ENCODE measurements at regions of chr12 and their contacts with region 1.

Region 1: DNA sequence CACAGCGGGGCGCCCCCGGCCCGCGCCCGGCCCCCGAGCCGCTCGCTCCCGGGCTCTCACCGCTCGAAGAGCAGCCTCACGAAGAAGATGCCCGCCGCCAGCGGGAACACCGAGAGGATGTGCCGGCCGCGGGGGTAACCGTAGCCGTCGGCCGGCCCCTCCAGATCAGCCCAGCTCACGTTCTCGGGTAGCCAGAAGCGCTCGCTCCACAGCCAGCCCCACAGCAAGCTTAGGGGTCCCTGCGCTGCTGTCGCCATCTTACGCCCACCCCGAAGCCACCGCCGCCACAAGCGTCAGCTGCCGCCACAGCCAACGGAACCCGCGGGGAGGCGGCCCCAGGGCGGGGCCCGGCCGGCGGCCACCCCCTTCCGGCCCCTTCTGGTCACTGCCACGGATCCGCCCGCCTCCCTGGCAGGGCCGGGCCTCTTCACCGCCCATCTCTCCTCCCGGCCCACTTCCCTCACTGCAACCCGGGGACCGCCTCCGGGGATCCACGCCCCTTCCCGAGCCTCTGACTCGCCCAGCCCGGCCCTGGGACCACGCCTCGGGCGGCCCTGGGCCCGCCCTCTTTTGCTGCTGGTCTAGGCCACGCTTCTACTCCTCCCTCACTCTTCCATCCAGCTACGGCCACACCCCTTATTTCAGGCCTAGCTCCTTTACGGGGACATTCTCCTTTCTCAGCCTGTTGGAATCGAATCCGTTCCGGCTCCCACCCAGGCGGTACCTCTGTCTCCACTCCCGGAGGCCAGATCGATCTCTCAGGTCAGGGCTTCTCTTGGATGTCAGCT is at the start of gene CERS5:
- DNase-seq: peak; percentile 99
- ATAC-seq: peak; percentile 99 to 100
- total RNA-seq, gene CERS5: 15.6 to 22.8 TPM

Region 2: GRCh38 chr12:49863946-49864797 is 303.1 kb before region 1 on chr12:
- intact Hi-C with region 1: no loop called
- DNase-seq: no peak
- ATAC-seq: no peak

Region 3: DNA sequence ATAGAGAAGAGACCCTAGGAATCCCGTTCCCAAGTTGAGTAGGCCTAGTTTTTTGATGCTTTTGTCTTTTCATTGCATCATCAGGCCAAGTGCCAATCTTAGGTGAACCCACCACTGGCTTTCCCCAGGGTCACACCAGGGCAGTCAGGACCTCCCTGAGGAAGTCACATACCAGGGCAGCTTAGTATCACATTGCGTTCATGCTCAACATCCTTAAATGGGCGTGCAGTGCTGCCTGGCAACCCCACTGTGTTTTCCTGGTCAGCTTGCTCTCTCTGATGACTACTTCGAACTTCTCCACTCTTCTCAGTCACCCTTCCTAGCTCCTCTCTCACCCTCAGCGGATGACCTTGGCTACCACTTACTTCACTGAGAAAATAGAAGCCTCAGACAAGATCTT is 100.8 kb before region 1 on chr12:
- intact Hi-C with region 1: no loop called
- DNase-seq: no peak
- ATAC-seq: peak; percentile 24 to 51

Region 4: DNA sequence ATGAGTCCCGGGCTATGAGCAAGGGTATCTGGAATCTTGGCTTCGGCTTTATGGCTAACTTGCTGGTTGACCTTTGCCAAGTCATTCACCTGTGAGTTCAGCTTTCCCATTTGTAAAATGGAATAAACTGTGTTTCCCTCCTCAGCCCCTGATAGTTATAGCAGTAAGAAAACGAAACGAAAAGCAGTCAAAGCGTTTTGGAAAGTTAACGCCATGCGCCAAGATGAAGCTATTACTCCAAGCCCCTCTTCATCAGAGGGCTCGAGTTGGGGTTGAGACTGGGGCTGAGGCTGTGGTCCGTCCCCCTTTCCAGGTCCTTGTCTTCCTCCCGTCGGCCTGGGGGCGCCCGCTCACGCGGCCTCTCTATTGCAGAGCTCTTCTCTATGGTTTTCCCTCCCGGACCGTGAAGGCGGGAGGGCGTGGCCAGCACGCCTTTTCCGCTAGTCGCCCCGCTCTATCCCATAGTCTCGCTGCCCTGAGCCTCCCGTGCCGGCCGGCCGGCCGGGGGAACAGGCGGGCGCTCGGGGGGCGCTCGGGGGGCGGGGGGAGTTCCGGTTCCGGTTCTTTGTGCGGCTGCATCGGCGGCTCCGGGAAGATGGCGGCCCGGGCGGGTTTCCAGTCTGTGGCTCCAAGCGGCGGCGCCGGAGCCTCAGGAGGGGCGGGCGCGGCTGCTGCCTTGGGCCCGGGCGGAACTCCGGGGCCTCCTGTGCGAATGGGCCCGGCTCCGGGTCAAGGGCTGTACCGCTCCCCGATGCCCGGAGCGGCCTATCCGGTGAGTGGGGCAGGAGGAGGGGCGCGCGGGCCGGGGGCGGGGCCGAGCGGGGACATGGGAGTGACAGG is 82.2 kb before region 1 on chr12 and contains the start of gene SMARCD1:
- intact Hi-C with region 1: loop called in 1 of 2 experiments (anchors 2 kb)
- DNase-seq: peak; percentile 94
- ATAC-seq: peak; percentile 94 to 97
- total RNA-seq, gene SMARCD1: 18.3 to 27.7 TPM

Region 5: GRCh38 chr12:50117057-50117622 is 50.1 kb before region 1 on chr12:
- intact Hi-C with region 1: loop called in 1 of 2 experiments (anchors 5 kb)
- DNase-seq: no peak
- ATAC-seq: peak; percentile 45 to 70

Region 6: DNA sequence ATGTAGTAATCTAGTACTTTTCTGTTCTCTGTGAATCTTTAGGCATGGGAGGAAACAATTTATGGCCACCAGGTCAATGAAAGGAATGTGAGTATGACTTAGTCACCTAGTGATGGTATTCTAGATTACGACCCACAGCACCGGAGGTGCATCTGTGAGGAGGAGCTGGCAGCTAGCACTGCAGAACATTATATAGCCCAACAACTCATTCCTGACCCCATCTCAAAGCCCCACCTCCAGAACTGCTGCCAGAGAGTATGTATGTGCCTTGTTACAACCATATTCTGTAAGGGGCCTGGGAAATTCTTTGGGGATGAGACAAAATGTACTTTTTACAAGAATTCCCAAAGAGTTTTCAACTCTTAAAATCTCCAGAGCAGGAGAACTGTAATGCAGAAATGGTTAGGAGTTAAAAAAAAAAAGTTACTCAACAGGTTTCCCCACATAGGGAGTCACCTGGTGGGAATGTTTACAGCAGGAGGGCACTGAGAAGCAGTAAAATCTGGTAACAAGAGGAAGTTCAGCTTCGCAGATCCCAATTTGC is 34.8 kb after region 1 on chr12:
- intact Hi-C with region 1: no loop called
- DNase-seq: no peak
- ATAC-seq: no peak